T-cell (primary cell): ENCODE measurements at regions of chr20 and their contacts with region 1.

Region 1: GRCh38 chr20:44695295-44696230 is 19.6 kb upstream of the CCN5 start:
- DNase-seq: no peak
- ATAC-seq: no peak
- H3K4me3 ChIP-seq: no peak overlapping the region
- H3K4me3 Mint-ChIP-seq: no peak overlapping the region
- H3K27ac ChIP-seq: no peak overlapping the region
- H3K27ac Mint-ChIP-seq: no peak overlapping the region
- H3K4me1 ChIP-seq: no peaks in the 10 kb centered on the region
- H3K4me1 Mint-ChIP-seq: peaks cover 0 to 6% (median 0%) of the 10 kb centered on the region in 3 donors
- H3K27me3 ChIP-seq: no peaks in the 10 kb centered on the region
- H3K27me3 Mint-ChIP-seq: no peaks in the 10 kb centered on the region

Region 2: GRCh38 chr20:44342248-44342647 is 353.3 kb before region 1 on chr20:
- CTCF ChIA-PET with region 1: interaction called in 1 of 2 experiments, 12 read pairs
- POLR2A ChIA-PET with region 1: no interaction called
- DNase-seq: no peak
- ATAC-seq: no peak
- H3K4me3 ChIP-seq: no peak overlapping the region
- H3K4me3 Mint-ChIP-seq: no peak overlapping the region
- H3K27ac ChIP-seq: no peak overlapping the region
- H3K27ac Mint-ChIP-seq: no peak overlapping the region
- H3K4me1 ChIP-seq: no peaks in the 10 kb centered on the region
- H3K4me1 Mint-ChIP-seq: no peaks in the 10 kb centered on the region
- H3K27me3 ChIP-seq: peaks cover 0 to 12% of the 10 kb centered on the region in 2 experiments
- H3K27me3 Mint-ChIP-seq: peaks cover 0 to 4% of the 10 kb centered on the region in 2 donors

Region 3: DNA sequence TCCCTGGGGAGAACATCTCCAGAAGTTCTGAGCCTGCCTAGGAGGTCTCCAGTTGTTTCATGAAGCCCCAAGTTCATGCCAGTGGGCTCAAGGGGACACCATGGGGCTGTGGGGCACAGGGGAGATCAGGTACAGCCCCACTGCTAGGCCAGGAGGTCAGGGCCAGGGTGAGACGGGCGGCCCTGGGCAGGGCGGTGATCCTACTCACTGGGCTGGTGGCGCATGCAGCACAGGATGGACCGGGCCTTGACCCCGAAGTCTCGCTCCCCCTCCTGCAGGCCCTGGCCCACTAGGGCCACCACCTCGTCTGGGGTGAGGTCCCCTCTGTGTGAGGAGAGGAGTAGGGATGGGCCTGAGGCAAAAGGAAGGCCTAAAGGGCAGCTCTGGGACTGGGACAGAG is 70.2 kb before region 1 on chr20:
- CTCF ChIA-PET with region 1: no interaction called
- POLR2A ChIA-PET with region 1: no interaction called
- DNase-seq: no peak
- ATAC-seq: no peak
- H3K4me3 ChIP-seq: no peak overlapping the region
- H3K4me3 Mint-ChIP-seq: no peak overlapping the region
- H3K27ac ChIP-seq: no peak overlapping the region
- H3K27ac Mint-ChIP-seq: no peak overlapping the region
- H3K4me1 ChIP-seq: peaks cover 0 to 4% of the 10 kb centered on the region in 2 experiments
- H3K4me1 Mint-ChIP-seq: peaks cover 0 to 16% (median 0%) of the 10 kb centered on the region in 3 donors
- H3K27me3 ChIP-seq: no peaks in the 10 kb centered on the region
- H3K27me3 Mint-ChIP-seq: no peaks in the 10 kb centered on the region

Region 4: GRCh38 chr20:44928595-44928994 is 233.0 kb after region 1 on chr20:
- CTCF ChIA-PET with region 1: no interaction called
- POLR2A ChIA-PET with region 1: no interaction called
- DNase-seq: no peak
- ATAC-seq: no peak
- H3K4me3 ChIP-seq: no peak overlapping the region
- H3K4me3 Mint-ChIP-seq: no peak overlapping the region
- H3K27ac ChIP-seq: no peak overlapping the region
- H3K27ac Mint-ChIP-seq: no peak overlapping the region
- H3K4me1 ChIP-seq: no peaks in the 10 kb centered on the region
- H3K4me1 Mint-ChIP-seq: no peaks in the 10 kb centered on the region
- H3K27me3 ChIP-seq: no peaks in the 10 kb centered on the region
- H3K27me3 Mint-ChIP-seq: no peaks in the 10 kb centered on the region